B cell (primary cell): ENCODE measurements at regions of chr9 and their contacts with region 1.

Region 1: DNA sequence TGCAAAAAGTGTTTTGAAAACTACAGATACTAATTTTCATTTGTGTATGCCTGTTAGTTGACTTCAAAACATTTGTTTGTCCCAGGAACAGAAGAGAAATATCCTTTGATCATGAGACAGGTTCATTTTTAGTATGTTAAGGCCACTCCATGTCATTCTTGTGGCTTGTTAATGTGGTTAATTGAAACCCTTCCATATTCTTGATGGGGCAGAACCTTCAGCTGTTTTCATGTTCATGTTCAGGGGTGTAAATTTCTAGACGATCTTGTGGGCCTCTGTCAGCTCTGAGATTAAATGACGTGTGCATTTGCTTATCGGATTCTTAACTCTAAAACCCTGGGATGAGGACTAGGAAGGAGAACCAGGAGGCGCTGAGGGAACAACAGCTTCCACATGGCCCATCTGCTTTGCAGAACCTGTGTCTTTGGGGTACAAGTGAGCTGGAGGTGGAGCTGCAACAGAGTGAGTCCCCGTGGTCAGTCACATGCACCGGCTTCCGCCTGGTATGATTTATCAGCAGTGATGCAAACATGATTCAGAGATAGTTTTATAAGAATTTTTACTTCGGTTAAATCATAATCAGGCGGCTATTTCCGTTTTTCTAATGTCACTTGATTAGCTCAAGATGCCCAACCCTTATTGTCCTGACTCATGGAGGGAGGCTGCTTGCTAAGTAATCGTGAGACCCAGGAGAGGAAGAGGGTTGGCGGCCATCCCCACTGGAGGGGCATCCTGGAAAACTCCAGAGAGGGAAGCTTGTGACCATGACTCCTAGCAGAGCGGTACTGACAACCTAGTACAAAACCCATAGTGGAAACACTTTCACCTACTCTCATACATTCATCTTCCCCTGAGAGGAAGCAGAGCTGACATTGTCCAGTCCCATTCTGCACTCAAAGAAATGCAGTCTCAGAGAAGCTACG is 138.4 kb downstream of the C9orf152 start:
- DNase-seq: no peak
- ATAC-seq: no peak
- H3K4me3 ChIP-seq: no peak overlapping the region
- H3K4me3 Mint-ChIP-seq: peak overlapping the region; percentile 26
- H3K27ac ChIP-seq: peak overlapping the region in 1 of 2 donors; percentile 45
- H3K27ac Mint-ChIP-seq: peak overlapping the region; percentile 65
- H3K4me1 ChIP-seq: peaks cover 57 to 72% of the 10 kb centered on the region in 2 donors
- H3K4me1 Mint-ChIP-seq: peaks cover 88% of the 10 kb centered on the region
- H3K27me3 ChIP-seq: no peaks in the 10 kb centered on the region
- H3K27me3 Mint-ChIP-seq: no peaks in the 10 kb centered on the region
- CTCF ChIP-seq: no peak

Region 2: GRCh38 chr9:110048403-110048975 is 21.1 kb before region 1 on chr9:
- CTCF ChIA-PET with region 1: interaction called, 3 read pairs
- POLR2A ChIA-PET with region 1: interaction called, 3 read pairs
- intact Hi-C with region 1: loop called (anchors 2 kb)
- DNase-seq: peak; percentile 91
- ATAC-seq: peak; percentile 95
- H3K4me3 ChIP-seq: peak overlapping the region; percentile 79 to 98 (median 88)
- H3K4me3 Mint-ChIP-seq: peak overlapping the region; percentile 98
- H3K27ac ChIP-seq: peak overlapping the region; percentile 40 to 71
- H3K27ac Mint-ChIP-seq: peak overlapping the region; percentile 93
- H3K4me1 ChIP-seq: peaks cover 42 to 47% of the 10 kb centered on the region in 2 donors
- H3K4me1 Mint-ChIP-seq: peaks cover 56% of the 10 kb centered on the region
- H3K27me3 ChIP-seq: no peaks in the 10 kb centered on the region
- H3K27me3 Mint-ChIP-seq: no peaks in the 10 kb centered on the region
- CTCF ChIP-seq: no peak

Region 3: GRCh38 chr9:110088099-110088498 is 18.5 kb after region 1 on chr9:
- CTCF ChIA-PET with region 1: interaction called, 3 read pairs
- POLR2A ChIA-PET with region 1: no interaction called
- intact Hi-C with region 1: loop called (anchors 2 kb)
- DNase-seq: no peak
- ATAC-seq: no peak
- H3K4me3 ChIP-seq: no peak overlapping the region
- H3K4me3 Mint-ChIP-seq: peak overlapping the region; percentile 20
- H3K27ac ChIP-seq: peak overlapping the region in 1 of 2 donors; percentile 58
- H3K27ac Mint-ChIP-seq: peak overlapping the region; percentile 64
- H3K4me1 ChIP-seq: peaks cover 62 to 69% of the 10 kb centered on the region in 2 donors
- H3K4me1 Mint-ChIP-seq: peaks cover 76% of the 10 kb centered on the region
- H3K27me3 ChIP-seq: no peaks in the 10 kb centered on the region
- H3K27me3 Mint-ChIP-seq: no peaks in the 10 kb centered on the region
- CTCF ChIP-seq: no peak

Region 4: GRCh38 chr9:110099236-110100095 is 29.9 kb after region 1 on chr9:
- CTCF ChIA-PET with region 1: no interaction called
- POLR2A ChIA-PET with region 1: no interaction called
- intact Hi-C with region 1: no loop called
- DNase-seq: no peak
- ATAC-seq: no peak
- H3K4me3 ChIP-seq: no peak overlapping the region
- H3K4me3 Mint-ChIP-seq: no peak overlapping the region
- H3K27ac ChIP-seq: peak overlapping the region; percentile 1 to 66
- H3K27ac Mint-ChIP-seq: peak overlapping the region; percentile 20
- H3K4me1 ChIP-seq: peaks cover 59 to 62% of the 10 kb centered on the region in 2 donors
- H3K4me1 Mint-ChIP-seq: peaks cover 85% of the 10 kb centered on the region
- H3K27me3 ChIP-seq: no peaks in the 10 kb centered on the region
- H3K27me3 Mint-ChIP-seq: no peaks in the 10 kb centered on the region
- CTCF ChIP-seq: no peak

Region 5: DNA sequence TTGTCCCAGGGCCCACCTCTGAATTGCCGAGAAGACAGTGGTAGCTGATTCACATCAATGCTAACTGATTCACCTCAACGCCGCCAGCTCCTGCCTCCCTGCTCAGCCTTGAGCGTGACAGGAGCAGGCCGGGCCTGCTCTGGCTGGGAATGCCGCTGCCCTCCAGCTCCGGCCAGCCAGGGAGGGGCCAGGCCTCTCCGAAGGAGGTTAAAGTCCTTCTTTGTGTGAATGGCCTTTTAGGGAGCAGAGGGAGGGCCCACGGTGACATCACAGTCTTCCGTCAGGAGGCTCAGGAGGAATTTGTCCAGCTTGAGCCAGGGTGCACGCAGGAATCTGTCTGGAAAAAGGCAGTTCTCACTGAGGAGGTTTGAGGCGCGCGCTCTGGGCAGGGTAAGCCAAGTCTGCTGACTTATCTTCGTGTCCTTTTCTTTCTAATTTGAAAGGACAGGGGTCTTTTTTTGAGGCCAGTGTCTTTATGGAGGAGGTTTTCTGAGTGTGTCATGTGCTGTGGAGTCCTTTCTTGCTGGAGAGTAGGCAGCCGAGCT is 55.7 kb after region 1 on chr9:
- CTCF ChIA-PET with region 1: no interaction called
- POLR2A ChIA-PET with region 1: no interaction called
- intact Hi-C with region 1: loop called (anchors 10 kb)
- DNase-seq: no peak
- ATAC-seq: no peak
- H3K4me3 ChIP-seq: no peak overlapping the region
- H3K4me3 Mint-ChIP-seq: peak overlapping the region; percentile 71
- H3K27ac ChIP-seq: peak overlapping the region; percentile 90 to 94
- H3K27ac Mint-ChIP-seq: peak overlapping the region; percentile 89
- H3K4me1 ChIP-seq: peaks cover 84 to 92% of the 10 kb centered on the region in 2 donors
- H3K4me1 Mint-ChIP-seq: peaks cover 97% of the 10 kb centered on the region
- H3K27me3 ChIP-seq: no peaks in the 10 kb centered on the region
- H3K27me3 Mint-ChIP-seq: no peaks in the 10 kb centered on the region
- CTCF ChIP-seq: no peak

Region 6: DNA sequence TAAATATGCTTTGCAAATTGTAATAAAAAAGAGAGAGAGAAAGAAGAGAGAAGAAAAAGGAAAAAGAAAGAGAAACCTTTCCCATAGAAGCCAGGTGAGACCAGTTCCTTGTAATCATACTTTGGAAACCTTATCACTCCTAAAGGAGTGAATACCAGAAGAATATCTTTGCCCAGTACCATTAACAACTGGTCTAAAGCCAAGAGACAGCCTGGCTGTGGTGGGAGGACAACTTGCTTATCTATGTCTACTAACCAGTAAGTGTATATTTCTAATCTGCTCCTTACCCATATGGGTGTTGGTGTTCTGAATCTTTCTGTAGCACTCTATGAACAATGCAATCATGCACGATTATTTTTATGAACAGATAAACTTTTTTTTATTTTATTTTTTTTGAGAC is 197.2 kb after region 1 on chr9:
- CTCF ChIA-PET with region 1: no interaction called
- POLR2A ChIA-PET with region 1: no interaction called
- intact Hi-C with region 1: no loop called
- DNase-seq: no peak
- ATAC-seq: no peak
- H3K4me3 ChIP-seq: no peak overlapping the region
- H3K4me3 Mint-ChIP-seq: no peak overlapping the region
- H3K27ac ChIP-seq: no peak overlapping the region
- H3K27ac Mint-ChIP-seq: no peak overlapping the region
- H3K4me1 ChIP-seq: no peaks in the 10 kb centered on the region
- H3K4me1 Mint-ChIP-seq: no peaks in the 10 kb centered on the region
- H3K27me3 ChIP-seq: no peaks in the 10 kb centered on the region
- H3K27me3 Mint-ChIP-seq: peaks cover 7% of the 10 kb centered on the region
- CTCF ChIP-seq: no peak

Region 7: DNA sequence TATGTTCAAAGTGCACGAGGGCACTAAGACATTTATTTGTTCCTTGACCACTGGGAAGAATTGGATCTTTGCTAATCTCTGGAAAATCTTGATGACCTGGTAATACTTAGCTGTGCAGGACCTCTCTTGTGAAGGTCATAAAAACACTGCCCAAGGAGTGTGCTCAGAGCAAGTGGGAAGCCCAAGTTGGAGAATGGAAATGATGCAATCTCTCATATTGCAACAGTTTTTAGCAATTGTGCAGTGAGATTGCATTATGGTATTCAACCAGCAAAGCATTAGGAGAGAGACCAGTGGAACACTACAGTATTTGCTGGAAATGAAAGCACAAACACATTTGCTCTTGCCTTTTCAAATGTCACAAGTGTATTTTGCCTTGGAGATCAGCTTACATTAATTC is 233.5 kb after region 1 on chr9:
- CTCF ChIA-PET with region 1: no interaction called
- POLR2A ChIA-PET with region 1: no interaction called
- intact Hi-C with region 1: no loop called
- DNase-seq: no peak
- ATAC-seq: no peak
- H3K4me3 ChIP-seq: no peak overlapping the region
- H3K4me3 Mint-ChIP-seq: no peak overlapping the region
- H3K27ac ChIP-seq: no peak overlapping the region
- H3K27ac Mint-ChIP-seq: no peak overlapping the region
- H3K4me1 ChIP-seq: peaks cover under 1 to 2% of the 10 kb centered on the region in 2 donors
- H3K4me1 Mint-ChIP-seq: no peaks in the 10 kb centered on the region
- H3K27me3 ChIP-seq: no peaks in the 10 kb centered on the region
- H3K27me3 Mint-ChIP-seq: peaks cover 22% of the 10 kb centered on the region
- CTCF ChIP-seq: no peak